Naive thymus-derived CD8-positive, alpha-beta T cell (primary cell): ENCODE measurements at regions of chr17 and their contacts with region 1.

Region 1: DNA sequence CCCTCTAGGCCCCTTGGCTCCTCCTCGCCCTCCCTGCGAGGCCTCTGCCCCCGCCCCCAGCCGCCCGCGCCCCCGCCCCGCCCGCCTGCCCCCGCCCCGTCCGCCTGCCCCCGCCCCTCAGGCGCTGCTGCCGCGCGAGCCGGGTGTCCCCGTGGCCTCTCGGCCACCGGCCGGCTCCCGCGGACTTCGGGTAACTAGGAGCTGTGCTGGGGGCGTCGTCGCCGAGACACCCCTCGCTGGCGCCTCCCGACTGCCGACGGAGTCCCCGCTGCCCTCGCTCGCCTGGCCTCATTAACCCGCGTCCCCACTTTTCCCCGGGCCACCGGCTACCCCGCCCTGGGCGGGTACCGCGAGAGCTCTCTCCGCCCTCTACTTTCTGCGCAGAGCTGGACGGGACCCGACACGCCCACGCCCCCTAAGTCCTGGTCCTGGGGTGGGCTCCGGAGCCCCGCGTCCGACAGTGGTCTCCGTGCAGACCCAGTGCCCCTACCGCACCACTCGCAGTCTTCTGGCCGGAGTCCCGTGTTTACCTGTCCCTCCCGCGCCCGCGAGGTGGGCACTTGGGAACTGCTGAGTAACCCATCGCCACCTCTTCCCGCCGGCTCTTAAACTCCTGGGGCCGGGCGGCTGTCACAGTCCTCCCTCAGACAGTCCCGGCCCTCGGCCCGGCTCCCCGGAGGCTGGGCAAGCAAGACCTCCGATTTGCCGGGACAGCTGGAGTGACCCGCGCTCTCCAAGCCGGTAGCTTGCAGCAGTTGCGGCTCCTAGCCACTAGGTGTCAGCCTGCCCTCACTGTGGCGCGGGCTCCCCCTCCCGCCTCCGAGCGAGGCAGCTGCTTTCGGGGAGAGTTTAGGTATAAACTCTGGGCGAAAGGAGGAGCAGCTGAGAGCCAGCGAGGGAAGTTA is at the start of gene TLCD1:
- DNase-seq: peak; percentile 82 to 93 (median 88)
- ATAC-seq: peak; percentile 37 to 44
- H3K4me3 Mint-ChIP-seq: peak within 1 kb of the TSS; percentile 95 to 100 (median 98)
- H3K27ac Mint-ChIP-seq: peak within 1 kb of the TSS; percentile 82 to 100 (median 99)
- H3K4me1 Mint-ChIP-seq: peaks cover 16 to 66% (median 54%) of the 10 kb centered on the region in 4 donors
- H3K27me3 Mint-ChIP-seq: no peaks in the 10 kb centered on the region
- polyA plus RNA-seq, gene TLCD1: 0.22 TPM in 1 of 3 donors, not detected in the others

Region 2: DNA sequence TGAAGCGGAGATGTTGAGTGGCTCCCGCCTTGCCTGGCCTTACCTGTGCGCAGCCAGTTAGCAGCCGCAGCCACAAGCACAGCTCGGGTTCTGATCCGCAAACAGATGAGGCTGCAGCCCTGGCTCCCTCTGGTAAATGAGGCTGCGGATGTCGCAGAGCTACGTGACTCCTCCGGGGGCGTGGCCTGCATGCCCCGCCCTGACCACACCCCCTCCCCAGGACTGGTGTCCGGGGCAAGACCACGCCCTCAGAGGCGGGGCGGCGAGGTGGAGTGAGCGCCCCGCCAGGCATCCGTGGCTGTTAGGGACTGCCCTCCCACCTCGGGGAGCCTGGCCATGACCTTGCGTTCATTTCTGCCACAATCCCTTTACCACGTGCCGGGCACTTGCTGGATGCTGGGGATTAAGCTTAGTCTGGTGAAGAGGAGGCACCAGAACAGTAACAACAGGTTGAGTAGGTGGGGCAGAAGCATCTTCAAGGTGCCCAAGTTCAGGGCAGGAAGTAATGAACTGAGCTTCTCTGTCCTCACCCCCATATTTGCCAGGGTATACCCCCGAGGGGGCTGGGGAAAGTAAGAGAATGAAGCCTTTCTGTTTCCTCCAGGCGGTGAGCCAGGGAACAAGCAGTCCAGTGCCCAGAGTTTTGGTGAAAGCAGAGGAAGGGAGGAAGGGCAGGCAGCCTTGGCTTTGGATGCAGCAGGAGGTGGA is 149.6 kb before region 1 on chr17 and contains the start of gene ALDOC:
- POLR2A ChIA-PET with region 1: no interaction called
- DNase-seq: peak; percentile 90 to 100 (median 97)
- ATAC-seq: peak; percentile 94 to 97
- H3K4me3 Mint-ChIP-seq: peak within 1 kb of the TSS; percentile 77 to 91 (median 87)
- H3K27ac Mint-ChIP-seq: peak within 1 kb of the TSS; percentile 82 to 96 (median 94)
- H3K4me1 Mint-ChIP-seq: peaks cover 24 to 43% (median 31%) of the 10 kb centered on the region in 4 donors
- H3K27me3 Mint-ChIP-seq: no peaks in the 10 kb centered on the region
- polyA plus RNA-seq, gene ALDOC: 65.3 to 86.7 (median 78.9) TPM

Region 3: DNA sequence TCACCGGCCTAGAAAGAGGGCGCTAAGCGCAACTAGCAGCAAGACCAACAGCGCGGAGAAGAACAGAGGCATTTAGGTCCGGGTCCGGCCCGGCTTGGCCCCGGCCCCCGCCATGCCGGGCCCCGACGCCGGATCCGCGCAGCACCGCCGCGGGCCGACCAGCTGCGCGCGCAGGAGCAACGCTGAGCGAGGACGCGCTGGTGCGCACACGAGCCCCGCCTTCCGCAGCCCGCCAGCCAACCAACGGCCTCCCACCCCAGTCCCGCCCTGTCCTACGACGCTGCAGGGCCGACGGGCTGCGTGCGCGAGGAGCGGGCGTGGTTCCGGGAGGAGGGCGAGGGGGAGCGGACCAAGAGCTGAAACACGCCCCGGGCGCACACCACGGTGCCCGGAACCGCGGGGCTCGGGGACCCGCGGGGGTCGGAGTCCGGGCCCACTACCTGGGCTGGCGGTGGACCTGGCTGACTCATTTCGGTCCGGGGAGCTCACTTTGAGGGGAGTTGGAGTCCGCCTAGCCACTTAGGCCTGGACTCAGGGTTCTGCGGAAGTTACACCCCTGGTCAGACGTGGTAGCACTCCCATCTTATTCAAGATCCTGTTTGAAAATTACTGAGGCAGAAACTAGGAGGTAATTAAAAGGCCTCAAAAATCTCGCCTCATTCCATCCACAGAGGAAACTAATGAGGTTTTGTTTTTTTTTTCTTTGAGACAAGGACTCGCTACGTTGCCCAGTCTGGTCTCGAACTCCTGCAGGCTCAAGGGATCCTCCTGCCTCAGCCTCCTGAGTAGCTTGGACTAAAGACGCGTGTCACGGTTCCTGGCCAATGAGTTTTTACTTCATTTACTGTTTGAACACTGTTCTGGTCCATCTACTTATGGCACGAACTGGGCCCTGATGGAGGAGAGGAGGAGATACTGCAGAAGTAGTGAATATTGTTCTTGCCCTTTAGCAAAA is 81.2 kb before region 1 on chr17 and contains the start of gene BLTP2:
- POLR2A ChIA-PET with region 1: interaction called, 32 read pairs
- DNase-seq: peak; percentile 90 to 97 (median 94)
- ATAC-seq: peak; percentile 94 to 97
- H3K4me3 Mint-ChIP-seq: peak within 1 kb of the TSS; percentile 90 to 98 (median 92)
- H3K27ac Mint-ChIP-seq: peak within 1 kb of the TSS; percentile 94 to 99 (median 97)
- H3K4me1 Mint-ChIP-seq: peaks cover 18 to 50% (median 41%) of the 10 kb centered on the region in 4 donors
- H3K27me3 Mint-ChIP-seq: no peaks in the 10 kb centered on the region
- polyA plus RNA-seq, gene BLTP2: 36.0 to 51.7 (median 36.1) TPM

Region 4: GRCh38 chr17:28750178-28751047 is 23.9 kb after region 1 on chr17:
- POLR2A ChIA-PET with region 1: interaction called, 365 read pairs
- DNase-seq: peak; percentile 79 to 94 (median 85)
- ATAC-seq: peak; percentile 84
- H3K4me3 Mint-ChIP-seq: peak overlapping the region in 1 of 10 donors; percentile 14
- H3K27ac Mint-ChIP-seq: peak overlapping the region in 5 of 10 donors; percentile 43 to 75 (median 69)
- H3K4me1 Mint-ChIP-seq: peaks cover 5 to 28% (median 16%) of the 10 kb centered on the region in 4 donors
- H3K27me3 Mint-ChIP-seq: no peaks in the 10 kb centered on the region

Region 5: GRCh38 chr17:28792877-28793661 is 66.6 kb after region 1 on chr17:
- POLR2A ChIA-PET with region 1: no interaction called
- DNase-seq: no peak
- ATAC-seq: no peak
- H3K4me3 Mint-ChIP-seq: no peak overlapping the region
- H3K27ac Mint-ChIP-seq: peak overlapping the region in 4 of 10 donors; percentile 9 to 63 (median 38)
- H3K4me1 Mint-ChIP-seq: peaks cover 14 to 44% (median 21%) of the 10 kb centered on the region in 4 donors
- H3K27me3 Mint-ChIP-seq: no peaks in the 10 kb centered on the region

Region 6: DNA sequence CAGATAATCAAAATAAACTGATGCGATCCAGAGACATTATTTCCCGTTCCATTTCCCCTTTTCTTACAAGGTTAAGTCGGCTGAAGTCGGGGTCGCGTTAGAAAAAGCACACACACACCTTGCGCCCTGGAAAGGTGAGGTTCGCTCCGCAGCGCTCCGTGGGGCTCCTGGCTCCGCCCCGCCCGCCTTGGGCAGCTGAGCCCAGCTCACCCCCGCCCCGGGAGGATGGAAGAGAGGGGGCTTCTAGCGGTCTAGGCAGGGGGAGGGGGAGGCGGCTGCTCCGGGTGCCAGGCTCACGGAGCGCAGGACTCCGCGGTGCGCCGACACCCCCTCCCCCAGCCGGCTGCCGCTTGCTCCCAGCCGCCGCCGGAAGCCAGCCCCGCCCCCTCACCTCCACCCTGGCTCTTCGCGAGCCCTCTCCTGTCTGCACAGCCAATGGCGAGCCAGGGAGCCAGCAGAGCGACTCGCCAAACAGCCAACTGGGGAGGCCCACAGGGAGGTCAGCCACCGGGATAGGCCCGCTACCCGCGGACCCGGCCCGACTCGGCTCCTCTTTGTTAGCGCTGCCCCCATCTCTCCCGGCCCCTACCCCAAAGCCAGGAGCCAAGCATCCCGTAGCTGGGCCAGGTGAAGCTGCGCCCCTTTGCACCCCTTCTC is 85.7 kb after region 1 on chr17:
- POLR2A ChIA-PET with region 1: interaction called, 11 read pairs
- DNase-seq: peak; percentile 88 to 97 (median 94)
- ATAC-seq: peak; percentile 97 to 99
- H3K4me3 Mint-ChIP-seq: peak overlapping the region; percentile 88 to 97 (median 93)
- H3K27ac Mint-ChIP-seq: peak overlapping the region; percentile 85 to 100 (median 96)
- H3K4me1 Mint-ChIP-seq: peaks cover 15 to 46% (median 34%) of the 10 kb centered on the region in 4 donors
- H3K27me3 Mint-ChIP-seq: no peaks in the 10 kb centered on the region

Region 7: DNA sequence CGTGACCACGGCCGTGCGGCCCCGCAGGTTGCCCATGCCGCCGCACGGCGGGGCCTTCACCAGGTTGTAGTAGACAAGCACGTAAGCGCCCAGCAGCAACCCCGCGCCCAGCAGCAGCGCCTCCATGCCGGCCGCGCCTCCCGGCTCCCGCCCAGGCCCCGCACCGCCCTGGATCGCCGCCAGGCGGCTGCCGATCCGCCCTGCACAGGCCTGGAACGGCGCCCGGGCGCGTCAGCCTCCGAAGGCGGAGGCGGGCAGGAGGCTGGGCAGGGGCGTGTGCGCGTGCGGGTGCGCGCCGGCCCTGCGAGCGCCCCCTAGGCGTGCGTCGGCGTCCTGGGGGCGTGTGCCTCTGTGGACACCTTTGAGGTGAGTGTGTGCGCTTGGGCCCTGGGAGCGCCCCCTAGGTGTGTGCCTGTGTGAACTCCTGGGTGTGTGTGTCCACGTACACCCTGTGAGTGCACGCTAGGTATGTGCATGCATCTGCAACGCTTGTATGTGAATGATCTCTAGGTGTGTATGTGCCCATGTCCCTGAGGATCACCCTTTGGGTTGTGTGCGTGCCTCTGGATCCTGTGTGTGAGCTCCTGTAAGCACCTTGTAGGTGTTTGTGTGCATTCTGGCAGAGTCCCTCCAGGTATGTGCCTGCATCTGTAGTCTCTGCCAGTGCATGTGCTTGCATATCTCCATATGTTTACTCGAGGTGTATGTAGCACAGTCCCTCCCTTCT is 176.5 kb after region 1 on chr17 and contains the start of gene DHRS13:
- POLR2A ChIA-PET with region 1: interaction called, 28 read pairs
- DNase-seq: peak; percentile 90 to 99 (median 96)
- ATAC-seq: peak; percentile 89 to 90
- H3K4me3 Mint-ChIP-seq: peak within 1 kb of the TSS; percentile 82 to 95 (median 90)
- H3K27ac Mint-ChIP-seq: peak within 1 kb of the TSS; percentile 83 to 97 (median 90)
- H3K4me1 Mint-ChIP-seq: peaks cover 23 to 41% (median 39%) of the 10 kb centered on the region in 4 donors
- H3K27me3 Mint-ChIP-seq: no peaks in the 10 kb centered on the region
- polyA plus RNA-seq, gene DHRS13: 17.1 to 22.8 (median 19.4) TPM